ENCODE measurements at regions of chr1 and their contacts with region 1.

Region 1: GRCh38 chr1:151254217-151255213 is at the start of gene PSMD4:
- DNase-seq: peak; percentile 88 to 97 (median 95)

Region 2: DNA sequence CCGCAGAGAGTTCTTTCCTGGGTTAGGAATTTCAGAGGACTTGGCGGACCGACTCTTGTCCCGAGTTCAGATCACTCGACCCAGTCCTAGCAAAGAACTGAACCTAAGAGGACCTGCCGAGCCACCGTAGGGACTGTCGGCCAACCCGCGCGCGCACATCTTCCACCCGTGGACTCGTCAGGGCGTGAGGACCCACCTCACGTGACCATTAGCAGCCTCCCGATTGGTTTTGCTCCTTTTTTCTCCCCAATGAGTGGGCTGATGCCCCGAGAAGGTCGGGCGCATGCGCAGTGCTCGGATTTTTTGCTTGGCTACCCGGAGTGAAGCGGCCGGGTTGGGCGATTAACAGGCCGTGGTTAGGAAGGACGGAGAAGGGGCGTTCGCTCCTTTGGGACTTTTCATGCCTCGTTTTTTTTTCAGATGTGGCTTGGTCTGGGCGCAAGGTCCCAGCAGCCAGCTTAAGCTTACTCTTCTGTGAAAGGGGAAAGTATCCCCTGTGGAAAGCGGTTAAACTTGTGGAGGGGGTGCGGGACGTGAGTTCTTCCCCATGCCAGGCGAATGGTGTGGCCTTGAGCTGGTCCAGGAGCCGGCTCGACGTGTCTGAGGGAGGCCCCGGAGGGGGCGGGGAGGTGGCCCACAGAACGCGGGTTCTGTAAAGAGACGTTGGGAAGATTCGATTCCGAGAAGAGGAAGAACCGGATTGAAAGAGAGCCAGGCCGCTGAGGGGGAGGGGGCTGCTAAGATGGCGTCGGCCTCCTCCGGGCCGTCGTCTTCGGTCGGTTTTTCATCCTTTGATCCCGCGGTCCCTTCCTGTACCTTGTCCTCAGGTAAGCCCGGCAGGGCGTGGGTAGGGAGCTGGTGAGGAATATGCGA is 56.0 kb before region 1 on chr1 and contains the start of gene PIP5K1A:
- intact Hi-C with region 1: loop called (anchors 2 kb)
- DNase-seq: peak; percentile 95 to 100 (median 99)

Region 3: GRCh38 chr1:151281969-151282882 is 27.7 kb after region 1 on chr1 and contains the start of gene ZNF687:
- intact Hi-C with region 1: loop called (anchors 2 kb)
- DNase-seq: peak; percentile 100

Measured in head of caudate nucleus (tissue), 42 donors.